ENCODE measurements at regions of chr11 and their contacts with region 1.

Region 1: DNA sequence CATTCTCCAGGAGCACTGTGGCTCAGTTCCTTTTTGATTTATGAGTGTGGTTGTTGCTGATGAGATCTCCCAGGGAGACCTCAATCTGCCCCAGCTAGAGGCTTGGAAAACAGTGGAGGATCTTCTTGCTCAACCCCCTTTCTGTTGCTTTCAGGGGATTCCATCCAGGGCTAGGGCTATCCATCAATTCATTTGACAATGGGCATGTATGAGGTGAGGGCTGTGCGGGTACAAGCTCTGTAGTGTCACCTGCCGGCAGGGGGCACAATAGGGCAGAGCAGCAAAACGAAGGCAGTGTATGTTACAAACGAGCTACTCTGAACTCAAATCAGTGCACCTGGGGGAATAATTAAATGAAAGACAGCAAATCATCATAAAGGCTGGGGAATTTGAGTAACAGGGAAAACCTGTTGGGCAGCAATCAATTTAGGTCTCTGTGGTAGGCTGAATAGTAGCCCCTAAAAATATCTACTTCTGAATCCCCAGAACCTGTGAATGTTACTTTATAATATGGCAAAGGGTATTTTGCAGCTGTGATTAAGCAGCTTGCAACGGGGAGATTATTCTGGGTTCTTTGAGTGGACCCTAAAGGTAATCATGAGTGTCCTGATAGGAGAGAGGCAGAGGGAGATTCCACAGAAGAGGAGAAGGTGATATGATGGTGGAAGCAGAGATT is 170.3 kb upstream of the ZBED5 start:
- DNase-seq: peak; percentile 74

Region 2: GRCh38 chr11:10808553-10809372 is 219.4 kb before region 1 on chr11 and contains the start of gene EIF4G2:
- in situ Hi-C with region 1: loop called (anchors 10 kb)
- DNase-seq: peak; percentile 98
- total RNA-seq, gene EIF4G2: 934 and 959 TPM in 2 replicates

Region 3: DNA sequence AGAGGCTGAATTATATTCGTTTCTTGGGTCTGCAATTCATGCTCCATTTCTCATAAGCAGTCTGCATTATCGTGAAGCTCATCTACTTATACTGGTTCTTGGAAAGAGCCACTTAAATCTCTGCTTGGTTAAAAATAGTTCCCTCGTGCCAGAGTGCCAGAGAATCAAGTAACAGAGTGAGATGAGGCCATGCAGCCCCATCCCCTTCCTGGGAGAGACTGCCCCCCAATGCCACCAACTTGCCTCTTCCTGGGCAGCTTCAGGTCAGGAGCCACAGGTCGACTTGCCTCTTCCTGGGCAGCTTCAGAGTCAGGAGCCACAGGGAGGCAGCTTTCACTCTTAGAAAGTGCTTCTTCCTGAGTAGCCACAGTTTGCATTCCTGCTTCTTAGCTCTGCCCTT is 53.6 kb after region 1 on chr11:
- in situ Hi-C with region 1: no loop called
- DNase-seq: no peak

Region 4: DNA sequence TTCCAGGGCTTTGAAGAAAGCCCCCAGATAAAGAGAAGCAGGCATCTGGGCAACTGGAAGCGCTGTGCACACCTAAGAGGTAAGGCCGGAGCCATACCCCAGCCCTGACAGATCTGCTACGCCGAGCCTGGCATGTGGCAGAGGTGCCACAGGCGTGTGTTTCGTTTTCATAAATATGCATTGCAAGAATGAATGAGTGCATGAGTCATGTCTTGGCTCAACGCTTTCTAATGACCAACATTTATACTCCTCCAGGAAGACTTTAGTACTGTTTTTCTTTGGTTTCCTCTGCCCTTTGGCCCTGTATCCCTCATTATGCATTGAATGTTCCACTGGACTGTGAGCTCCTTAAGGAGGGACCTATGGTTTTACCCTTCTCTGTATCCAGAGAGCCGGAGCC is 363.6 kb after region 1 on chr11:
- in situ Hi-C with region 1: loop called (anchors 10 kb)
- DNase-seq: no peak